Activated CD4-positive, alpha-beta T cell treated with anti-CD3 and anti-CD28 coated beads for 36 hours (primary cell): ENCODE measurements at regions of chr19 and their contacts with region 1.

Region 1: DNA sequence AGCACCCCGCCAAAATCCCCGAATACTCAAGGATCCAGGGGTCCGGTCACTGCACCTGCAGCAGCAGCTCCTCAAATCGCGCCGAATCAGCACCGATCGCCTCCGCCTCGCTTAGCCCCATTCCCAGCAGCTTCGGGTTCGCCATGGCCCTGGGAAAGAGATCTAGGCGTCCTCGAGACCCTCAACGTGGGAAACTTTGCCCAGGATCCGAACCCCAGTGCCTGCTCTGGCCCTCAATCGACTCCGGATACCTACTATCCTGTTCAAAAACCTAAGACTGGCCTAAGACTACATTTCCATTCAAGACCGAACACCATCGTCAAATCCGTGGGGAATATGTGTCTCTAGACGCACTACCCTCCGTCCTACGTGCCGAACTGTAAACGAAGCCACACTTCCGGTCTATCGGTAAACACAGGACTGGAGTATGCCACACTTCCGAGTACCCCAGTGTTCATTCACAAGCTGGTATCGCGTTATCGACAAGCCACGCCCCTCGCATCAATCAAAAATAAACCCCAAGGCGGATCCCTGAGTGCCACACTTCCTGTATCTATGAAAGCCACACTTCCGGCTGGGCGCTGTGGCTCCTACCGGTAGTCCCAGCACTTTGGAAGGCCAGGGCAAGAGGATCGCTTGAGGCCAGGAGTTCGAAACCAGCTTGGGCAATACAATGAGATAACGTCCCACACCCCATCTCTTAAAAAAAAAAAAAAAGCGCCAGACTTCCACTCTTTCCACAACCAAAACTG is at the start of gene PIH1D1:
- DNase-seq: peak; percentile 98
- ATAC-seq: peak; percentile 71
- H3K4me3 Mint-ChIP-seq: peak within 1 kb of the TSS; percentile 100
- H3K27ac Mint-ChIP-seq: peak within 1 kb of the TSS; percentile 100
- H3K4me1 Mint-ChIP-seq: peaks cover 50% of the 10 kb centered on the region
- H3K27me3 Mint-ChIP-seq: no peaks in the 10 kb centered on the region
- total RNA-seq, gene PIH1D1: 117 to 138 TPM

Region 2: DNA sequence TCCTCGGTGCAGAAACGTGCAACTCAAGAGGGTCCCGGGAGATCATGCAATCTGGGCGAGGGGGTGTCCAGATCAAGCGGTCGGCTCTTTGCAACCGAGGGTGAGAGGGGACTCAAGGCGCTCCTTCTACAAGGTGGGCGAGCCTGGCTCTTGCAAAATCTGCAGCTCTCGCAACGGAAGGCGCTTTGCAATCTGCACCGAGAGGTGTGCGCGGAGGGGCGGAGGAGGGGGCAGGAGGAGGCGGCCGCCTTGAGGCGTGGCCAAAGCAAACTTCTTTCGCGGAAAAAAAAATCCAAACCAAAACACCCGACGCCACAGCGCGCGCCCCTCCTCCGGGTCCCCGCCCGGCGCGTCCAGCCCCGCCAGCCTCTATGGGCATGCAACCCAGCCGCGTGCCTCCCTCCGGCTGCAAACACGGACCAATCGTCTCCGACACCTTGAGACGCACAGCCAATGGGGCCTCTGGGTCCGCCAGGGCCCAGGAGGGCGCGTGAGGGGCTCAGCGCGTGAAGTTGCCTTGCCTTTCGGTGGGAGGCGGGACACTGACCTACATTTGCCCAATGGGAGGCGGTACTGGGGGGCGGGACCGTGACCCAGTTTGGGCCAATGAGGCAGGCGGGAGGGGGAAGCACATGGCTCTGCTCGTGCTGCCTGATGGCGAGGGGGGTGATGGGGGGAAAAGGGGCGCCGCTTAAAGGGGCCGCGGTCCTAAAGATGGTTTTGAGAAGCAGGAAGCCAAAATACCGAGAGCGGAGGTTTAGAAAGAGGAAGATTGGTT is 814.2 kb before region 1 on chr19 and contains the start of gene DBP:
- CTCF ChIA-PET with region 1: no interaction called
- POLR2A ChIA-PET with region 1: no interaction called
- intact Hi-C with region 1: loop called in 1 of 2 experiments (anchors 5 kb)
- DNase-seq: peak; percentile 98
- ATAC-seq: peak; percentile 75
- H3K4me3 Mint-ChIP-seq: peak within 1 kb of the TSS; percentile 83
- H3K27ac Mint-ChIP-seq: peak within 1 kb of the TSS; percentile 99
- H3K4me1 Mint-ChIP-seq: peaks cover 55% of the 10 kb centered on the region
- H3K27me3 Mint-ChIP-seq: no peaks in the 10 kb centered on the region
- total RNA-seq, gene DBP: 8.3 to 12.4 TPM

Region 3: DNA sequence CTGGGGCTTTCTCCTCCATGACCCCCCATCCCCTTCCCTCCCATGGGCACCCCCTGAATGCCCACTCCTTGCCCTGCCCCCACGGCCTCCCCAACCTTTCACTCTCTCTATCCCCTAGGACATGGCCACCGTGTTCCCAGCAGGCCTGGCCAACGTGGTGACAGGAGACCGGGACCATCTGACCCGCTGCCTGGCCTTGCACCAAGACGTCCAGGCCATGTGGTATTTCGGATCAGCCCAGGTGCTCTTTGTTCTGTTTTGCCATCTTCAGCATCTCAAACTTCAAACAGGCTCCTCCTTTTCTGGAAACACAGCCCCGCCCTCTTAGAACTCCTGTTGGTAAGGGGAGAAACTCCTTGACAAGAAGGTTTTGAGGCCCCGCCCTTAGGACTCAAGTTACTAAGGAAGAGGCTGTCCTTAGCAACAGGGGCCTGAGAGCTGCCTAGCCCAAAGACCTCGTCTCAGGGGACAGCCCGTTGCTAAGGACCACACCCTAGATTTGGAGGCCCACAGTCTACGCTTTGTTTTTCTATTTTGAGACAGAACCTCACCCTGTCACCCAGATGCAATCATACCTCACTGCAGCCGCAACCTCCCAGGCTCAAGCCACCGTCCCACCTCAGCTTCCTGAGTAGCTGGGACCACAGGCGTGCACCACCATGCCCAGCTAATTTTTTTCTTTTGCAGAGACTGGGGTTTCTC is 17.3 kb after region 1 on chr19:
- CTCF ChIA-PET with region 1: interaction called, 23 read pairs
- POLR2A ChIA-PET with region 1: interaction called, 18 read pairs
- intact Hi-C with region 1: loop called (anchors 1 kb)
- DNase-seq: peak; percentile 88
- ATAC-seq: peak; percentile 75
- H3K4me3 Mint-ChIP-seq: peak overlapping the region; percentile 64
- H3K27ac Mint-ChIP-seq: peak overlapping the region; percentile 98
- H3K4me1 Mint-ChIP-seq: peaks cover 49% of the 10 kb centered on the region
- H3K27me3 Mint-ChIP-seq: no peaks in the 10 kb centered on the region

Region 4: DNA sequence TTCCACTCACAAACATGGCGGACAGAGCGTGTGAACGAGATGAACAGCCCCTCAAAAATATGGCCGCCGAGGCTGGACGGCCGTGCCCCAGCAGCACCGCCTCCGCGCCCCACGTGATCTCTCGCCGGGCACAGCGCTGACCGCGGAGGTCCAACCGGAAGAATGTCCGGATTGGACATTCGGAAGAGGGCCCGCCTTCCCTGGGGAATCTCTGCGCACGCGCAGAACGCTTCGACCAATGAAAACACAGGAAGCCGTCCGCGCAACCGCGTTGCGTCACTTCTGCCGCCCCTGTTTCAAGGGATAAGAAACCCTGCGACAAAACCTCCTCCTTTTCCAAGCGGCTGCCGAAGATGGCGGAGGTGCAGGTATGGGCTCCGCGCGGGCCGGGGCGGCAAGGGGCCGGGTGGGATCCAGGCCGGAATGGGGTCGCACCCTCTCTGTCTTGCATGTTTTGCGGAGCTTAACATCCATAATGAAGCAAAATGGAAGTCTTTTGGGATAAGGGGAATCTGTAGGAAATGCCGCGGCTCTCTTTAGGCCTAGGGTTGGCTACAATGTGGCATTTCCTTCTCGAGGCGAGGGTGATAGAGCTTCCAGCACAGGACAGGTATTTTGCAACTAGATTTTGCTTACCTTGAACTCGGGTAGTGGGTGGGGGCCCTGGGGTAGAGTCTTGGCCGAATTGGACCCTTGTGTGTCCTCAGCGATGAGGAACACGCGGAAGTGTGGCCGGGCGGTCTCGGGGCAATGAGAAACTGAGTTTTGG is 35.9 kb after region 1 on chr19 and contains the start of gene RPL13A:
- CTCF ChIA-PET with region 1: no interaction called
- POLR2A ChIA-PET with region 1: interaction called, 5 read pairs
- intact Hi-C with region 1: loop called (anchors 1 to 5 kb)
- DNase-seq: peak; percentile 100
- ATAC-seq: peak; percentile 90
- H3K4me3 Mint-ChIP-seq: peak within 1 kb of the TSS; percentile 99
- H3K27ac Mint-ChIP-seq: peak within 1 kb of the TSS; percentile 97
- H3K4me1 Mint-ChIP-seq: peaks cover 26% of the 10 kb centered on the region
- H3K27me3 Mint-ChIP-seq: no peaks in the 10 kb centered on the region
- total RNA-seq, gene RPL13A: 3,861 to 3,967 TPM

Region 5: GRCh38 chr19:49580264-49581006 is 128.8 kb after region 1 on chr19 and contains the start of gene NOSIP:
- CTCF ChIA-PET with region 1: interaction called, 3 read pairs
- POLR2A ChIA-PET with region 1: no interaction called
- intact Hi-C with region 1: loop called in 1 of 2 experiments (anchors 1 kb)
- DNase-seq: peak; percentile 98
- ATAC-seq: peak; percentile 97
- H3K4me3 Mint-ChIP-seq: peak within 1 kb of the TSS; percentile 92
- H3K27ac Mint-ChIP-seq: peak within 1 kb of the TSS; percentile 89
- H3K4me1 Mint-ChIP-seq: peaks cover 34% of the 10 kb centered on the region
- H3K27me3 Mint-ChIP-seq: no peaks in the 10 kb centered on the region
- total RNA-seq, gene NOSIP: 71.4 to 73.1 TPM

Region 6: DNA sequence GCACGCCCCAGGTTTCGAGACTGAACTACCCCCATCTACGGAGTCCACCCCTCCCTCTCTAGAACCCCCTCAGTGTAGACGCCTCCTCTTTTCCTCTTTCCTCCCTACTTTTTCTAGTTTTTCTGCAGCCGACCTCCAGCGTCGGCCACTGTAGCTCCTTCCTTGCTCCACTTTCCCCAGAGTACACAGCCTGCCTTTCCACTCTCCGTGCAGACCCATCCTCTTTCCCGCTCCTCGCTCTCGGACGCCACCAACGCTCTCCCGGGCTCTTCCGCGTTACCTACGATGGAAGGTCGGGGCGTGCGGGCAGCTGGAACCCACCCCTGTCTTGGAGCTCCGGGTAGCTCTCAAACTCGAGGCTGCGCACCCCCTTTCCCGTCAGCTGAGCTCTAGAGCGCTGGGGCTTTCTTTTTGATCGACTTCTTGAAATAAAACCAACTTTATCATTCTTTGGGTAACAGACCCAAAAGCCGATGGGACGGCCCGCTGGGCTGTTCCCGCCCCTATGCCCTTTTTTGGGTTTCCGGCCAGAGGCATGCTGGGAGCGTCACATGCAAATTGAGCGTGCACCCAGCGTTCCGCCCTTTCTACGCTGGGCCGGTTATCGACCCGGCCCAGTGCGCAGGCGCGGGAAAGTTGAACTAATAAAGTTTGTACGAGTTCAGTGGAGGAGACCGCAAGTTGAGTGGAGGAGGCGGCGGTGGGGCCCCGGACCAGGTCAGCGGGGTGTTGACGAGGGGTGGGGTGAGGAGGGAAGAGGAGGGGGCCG is 213.9 kb after region 1 on chr19 and contains the starts of genes BCL2L12 and IRF3:
- CTCF ChIA-PET with region 1: no interaction called
- POLR2A ChIA-PET with region 1: no interaction called
- intact Hi-C with region 1: loop called in 1 of 2 experiments (anchors 1 kb)
- DNase-seq: peak; percentile 100
- ATAC-seq: peak; percentile 86
- H3K4me3 Mint-ChIP-seq: peak within 1 kb of the TSS; percentile 96
- H3K27ac Mint-ChIP-seq: peak within 1 kb of the TSS; percentile 92
- H3K4me1 Mint-ChIP-seq: peaks cover 29% of the 10 kb centered on the region
- H3K27me3 Mint-ChIP-seq: no peaks in the 10 kb centered on the region
- total RNA-seq, gene BCL2L12: 79.6 to 93.8 TPM
- total RNA-seq, gene IRF3: 123 to 125 TPM

Region 7: DNA sequence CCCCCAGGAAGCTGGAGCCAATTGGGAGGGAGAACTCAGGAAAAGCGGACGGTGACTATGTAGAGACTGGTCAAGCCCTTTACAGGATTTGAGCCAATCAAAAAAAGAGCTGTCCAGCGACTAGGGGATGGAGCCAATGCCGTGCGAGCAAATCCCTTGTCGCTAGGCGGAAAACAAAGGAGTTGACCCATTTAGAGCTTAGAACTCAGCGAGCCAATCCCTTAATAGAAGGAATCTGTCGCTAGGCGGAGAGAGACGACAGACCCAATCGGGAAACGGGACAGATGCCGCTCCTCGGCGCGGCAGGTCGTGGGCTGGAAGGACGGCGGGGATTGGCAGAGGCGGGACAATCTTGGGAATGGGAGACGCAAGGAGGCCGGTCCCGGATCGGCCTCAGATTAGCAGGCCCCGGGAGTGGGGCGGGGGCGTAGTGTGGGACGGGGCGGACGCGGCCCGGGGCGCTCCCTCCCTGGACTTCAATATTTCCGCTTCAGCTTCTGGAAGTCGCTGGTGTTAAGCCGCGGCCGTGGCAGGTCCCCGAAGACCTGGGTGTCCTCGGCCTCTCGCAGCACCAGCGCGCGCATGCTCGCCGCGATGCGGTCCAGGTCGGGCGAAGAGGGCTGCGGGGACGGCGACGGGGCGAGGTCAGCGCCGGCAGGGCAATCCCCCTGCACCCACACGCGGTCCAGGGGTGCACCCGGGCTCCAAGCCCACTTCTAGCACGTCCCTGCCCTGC is 418.0 kb after region 1 on chr19:
- CTCF ChIA-PET with region 1: no interaction called
- POLR2A ChIA-PET with region 1: no interaction called
- intact Hi-C with region 1: loop called in 1 of 2 experiments (anchors 2 kb)
- DNase-seq: peak; percentile 94
- ATAC-seq: peak; percentile 87
- H3K4me3 Mint-ChIP-seq: no peak overlapping the region
- H3K27ac Mint-ChIP-seq: no peak overlapping the region
- H3K4me1 Mint-ChIP-seq: peaks cover 39% of the 10 kb centered on the region
- H3K27me3 Mint-ChIP-seq: no peaks in the 10 kb centered on the region